ENCODE measurements at regions of chrX and their contacts with region 1.

Region 1: GRCh38 chrX:151830911-151831310 is 81.8 kb upstream of the MAGEA4 start:
- DNase-seq: no peak
- H3K4me3 ChIP-seq: no peak overlapping the region
- H3K27ac ChIP-seq: no peak overlapping the region
- H3K4me1 ChIP-seq: no peaks in the 10 kb centered on the region
- H3K27me3 ChIP-seq: no peaks in the 10 kb centered on the region
- CTCF ChIP-seq: no peak
- POLR2A ChIP-seq: no peak

Region 2: GRCh38 chrX:151776181-151776731 is 54.7 kb before region 1 on chrX:
- intact Hi-C with region 1: loop called (anchors 10 kb)
- DNase-seq: no peak
- H3K4me3 ChIP-seq: no peak overlapping the region
- H3K27ac ChIP-seq: no peak overlapping the region
- H3K4me1 ChIP-seq: no peaks in the 10 kb centered on the region
- H3K27me3 ChIP-seq: no peaks in the 10 kb centered on the region
- CTCF ChIP-seq: no peak
- POLR2A ChIP-seq: no peak